ENCODE measurements at regions of chr4 and their contacts with region 1.

Region 1: GRCh38 chr4:6250235-6250983 is 19.2 kb upstream of the WFS1 start:
- DNase-seq: no peak
- H3K4me3 ChIP-seq: no peak overlapping the region
- H3K27ac ChIP-seq: no peak overlapping the region
- H3K4me1 ChIP-seq: no peaks in the 10 kb centered on the region
- H3K27me3 ChIP-seq: no peaks in the 10 kb centered on the region
- CTCF ChIP-seq: peak; percentile 71 to 81 (median 77)
- EP300 ChIP-seq: no peak
- POLR2A ChIP-seq: no peak

Region 2: GRCh38 chr4:6076391-6076790 is 174.0 kb before region 1 on chr4:
- intact Hi-C with region 1: no loop called
- DNase-seq: no peak
- H3K4me3 ChIP-seq: no peak overlapping the region
- H3K27ac ChIP-seq: no peak overlapping the region
- H3K4me1 ChIP-seq: no peaks in the 10 kb centered on the region
- H3K27me3 ChIP-seq: no peaks in the 10 kb centered on the region
- CTCF ChIP-seq: no peak
- EP300 ChIP-seq: no peak
- POLR2A ChIP-seq: no peak

Region 3: GRCh38 chr4:6546681-6547447 is 296.5 kb after region 1 on chr4:
- intact Hi-C with region 1: loop called in 2 of 4 experiments (anchors 5 to 10 kb)
- DNase-seq: peak in 2 of 5 donors; percentile 33 to 51
- H3K4me3 ChIP-seq: no peak overlapping the region
- H3K27ac ChIP-seq: no peak overlapping the region
- H3K4me1 ChIP-seq: no peaks in the 10 kb centered on the region
- H3K27me3 ChIP-seq: no peaks in the 10 kb centered on the region
- CTCF ChIP-seq: peak; percentile 15 to 36 (median 19)
- EP300 ChIP-seq: no peak
- POLR2A ChIP-seq: no peak